ENCODE measurements at regions of chr1 and their contacts with region 1.

Region 1: DNA sequence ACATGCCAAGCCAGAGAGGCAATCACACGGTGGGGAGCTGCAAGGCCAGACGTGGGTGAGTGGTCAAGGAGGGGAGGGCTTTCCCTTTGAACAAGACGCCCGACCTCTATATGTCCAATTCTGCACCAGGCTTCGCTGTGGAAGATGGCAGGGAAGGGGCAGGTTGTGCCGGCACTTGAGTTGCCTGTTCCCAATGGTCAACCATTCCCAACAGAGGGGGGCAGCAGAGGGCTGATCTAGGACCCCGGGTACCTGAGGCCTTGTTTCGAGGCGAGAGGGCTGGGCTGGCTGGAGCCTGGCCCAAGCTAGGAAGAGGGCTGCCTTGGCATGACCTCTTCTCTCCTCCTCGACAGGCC is 64.9 kb downstream of the TMEM53 start:
- DNase-seq: peak; percentile 68
- H3K4me3 Mint-ChIP-seq: no peak overlapping the region
- H3K27ac Mint-ChIP-seq: no peak overlapping the region
- H3K4me1 Mint-ChIP-seq: no peaks in the 10 kb centered on the region
- H3K27me3 Mint-ChIP-seq: peaks cover 78% of the 10 kb centered on the region
- CTCF ChIP-seq: peak; percentile 38

Region 2: GRCh38 chr1:44652445-44653106 is 43.2 kb after region 1 on chr1:
- CTCF ChIA-PET with region 1: interaction called, 12 read pairs
- intact Hi-C with region 1: loop called (anchors 1 kb)
- DNase-seq: peak; percentile 80
- H3K4me3 Mint-ChIP-seq: no peak overlapping the region
- H3K27ac Mint-ChIP-seq: no peak overlapping the region
- H3K4me1 Mint-ChIP-seq: no peaks in the 10 kb centered on the region
- H3K27me3 Mint-ChIP-seq: no peaks in the 10 kb centered on the region
- CTCF ChIP-seq: peak; percentile 90